OCI-LY7 (cell line): ENCODE measurements at regions of chrX and their contacts with region 1.

Region 1: GRCh38 chrX:49915361-49916222 is 6.8 kb upstream of the CLCN5 start:
- DNase-seq: peak; percentile 57
- H3K4me3 ChIP-seq: no peak overlapping the region
- H3K27ac ChIP-seq: no peak overlapping the region
- H3K4me1 ChIP-seq: no peaks in the 10 kb centered on the region
- CTCF ChIP-seq: peak; percentile 80

Region 2: GRCh38 chrX:49618574-49618973 is 297.0 kb before region 1 on chrX:
- CTCF ChIA-PET with region 1: no interaction called
- POLR2A ChIA-PET with region 1: no interaction called
- intact Hi-C with region 1: no loop called
- DNase-seq: no peak
- H3K4me3 ChIP-seq: no peak overlapping the region
- H3K27ac ChIP-seq: no peak overlapping the region
- H3K4me1 ChIP-seq: no peaks in the 10 kb centered on the region
- CTCF ChIP-seq: no peak

Region 3: GRCh38 chrX:49884290-49884862 is 31.2 kb before region 1 on chrX:
- CTCF ChIA-PET with region 1: interaction called, 3 read pairs
- POLR2A ChIA-PET with region 1: no interaction called
- intact Hi-C with region 1: loop called (anchors 5 kb)
- DNase-seq: peak; percentile 53
- H3K4me3 ChIP-seq: no peak overlapping the region
- H3K27ac ChIP-seq: no peak overlapping the region
- H3K4me1 ChIP-seq: peaks cover 3% of the 10 kb centered on the region
- CTCF ChIP-seq: peak; percentile 80

Region 4: GRCh38 chrX:49977319-49978090 is 61.9 kb after region 1 on chrX:
- CTCF ChIA-PET with region 1: no interaction called
- POLR2A ChIA-PET with region 1: no interaction called
- intact Hi-C with region 1: no loop called
- DNase-seq: no peak
- H3K4me3 ChIP-seq: no peak overlapping the region
- H3K27ac ChIP-seq: no peak overlapping the region
- H3K4me1 ChIP-seq: no peaks in the 10 kb centered on the region
- CTCF ChIP-seq: no peak

Region 5: DNA sequence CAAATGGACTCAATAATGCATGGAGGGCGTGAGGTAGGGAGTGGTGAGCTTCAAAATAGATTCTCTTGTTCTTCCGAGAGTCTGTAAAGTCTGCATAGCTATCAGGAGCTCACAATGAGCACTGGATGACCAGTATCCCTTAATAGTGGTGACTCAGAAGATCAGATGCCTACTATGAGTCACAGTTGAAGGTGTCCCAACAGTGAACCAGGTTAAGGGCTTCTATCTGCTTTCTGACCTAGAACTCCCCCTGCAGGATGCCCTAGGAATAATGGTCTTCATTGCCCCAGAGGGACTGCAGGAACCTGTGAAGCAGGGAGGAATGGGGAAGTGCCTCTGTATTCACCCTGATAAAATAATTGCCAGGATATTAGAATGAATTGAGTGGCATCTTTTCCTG is 533.0 kb after region 1 on chrX:
- CTCF ChIA-PET with region 1: no interaction called
- POLR2A ChIA-PET with region 1: no interaction called
- intact Hi-C with region 1: loop called (anchors 5 kb)
- DNase-seq: peak; percentile 2
- H3K4me3 ChIP-seq: no peak overlapping the region
- H3K27ac ChIP-seq: no peak overlapping the region
- H3K4me1 ChIP-seq: no peaks in the 10 kb centered on the region
- CTCF ChIP-seq: peak; percentile 51

Region 6: GRCh38 chrX:50579955-50580354 is 664.4 kb after region 1 on chrX:
- CTCF ChIA-PET with region 1: no interaction called
- POLR2A ChIA-PET with region 1: no interaction called
- intact Hi-C with region 1: loop called (anchors 1 kb)
- DNase-seq: peak; percentile 67
- H3K4me3 ChIP-seq: no peak overlapping the region
- H3K27ac ChIP-seq: no peak overlapping the region
- H3K4me1 ChIP-seq: no peaks in the 10 kb centered on the region
- CTCF ChIP-seq: peak; percentile 76